HAP-1 (cell line): ENCODE measurements at regions of chr6 and their contacts with region 1.

Region 1: DNA sequence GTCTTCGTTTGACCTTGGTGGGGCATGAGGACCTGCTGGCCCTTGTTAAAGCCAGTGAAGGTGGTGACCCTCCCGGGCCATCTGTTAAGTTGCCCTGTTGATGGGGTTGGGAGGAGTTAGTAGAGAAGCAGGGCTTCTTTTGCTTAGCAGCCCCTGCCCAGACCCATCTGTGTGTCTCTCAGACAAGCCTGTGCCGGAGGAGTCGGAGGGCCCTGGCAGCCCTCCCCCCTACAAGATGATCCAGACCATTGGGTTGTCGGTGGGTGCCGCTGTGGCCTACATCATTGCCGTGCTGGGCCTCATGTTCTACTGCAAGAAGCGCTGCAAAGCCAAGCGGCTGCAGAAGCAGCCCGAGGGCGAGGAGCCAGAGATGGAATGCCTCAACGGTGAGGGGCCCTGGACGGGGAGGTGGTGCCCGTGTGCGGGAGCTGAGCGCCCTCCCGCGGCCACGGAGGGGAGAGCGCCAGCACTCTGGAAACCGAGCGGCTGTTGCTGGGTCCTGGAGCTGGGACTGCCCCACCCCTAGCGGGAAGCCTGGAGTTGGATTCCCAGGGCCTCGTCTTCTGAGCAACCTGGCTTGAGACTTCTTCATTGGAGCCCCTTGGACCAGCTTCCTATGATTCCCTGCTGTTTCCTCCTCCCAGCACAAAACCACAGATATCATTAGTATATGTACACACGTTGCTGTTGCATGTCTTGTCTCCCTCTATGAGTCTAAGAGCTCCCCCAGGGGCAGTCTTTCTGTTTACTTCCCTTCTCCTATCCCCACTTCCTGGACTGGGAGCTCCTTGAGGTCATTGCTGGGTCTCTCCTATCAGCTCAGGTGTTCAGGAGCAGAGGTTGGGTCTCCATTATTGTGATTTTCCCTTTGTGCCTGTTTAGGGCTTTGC is 27.6 kb upstream of the SRF start:
- DNase-seq: peak; percentile 84 to 91
- H3K4me3 ChIP-seq: no peak overlapping the region
- H3K4me1 ChIP-seq: peaks cover 3% of the 10 kb centered on the region; the same call in 1 of the 2 replicates
- H3K27me3 ChIP-seq: no peaks in the 10 kb centered on the region

Region 2: DNA sequence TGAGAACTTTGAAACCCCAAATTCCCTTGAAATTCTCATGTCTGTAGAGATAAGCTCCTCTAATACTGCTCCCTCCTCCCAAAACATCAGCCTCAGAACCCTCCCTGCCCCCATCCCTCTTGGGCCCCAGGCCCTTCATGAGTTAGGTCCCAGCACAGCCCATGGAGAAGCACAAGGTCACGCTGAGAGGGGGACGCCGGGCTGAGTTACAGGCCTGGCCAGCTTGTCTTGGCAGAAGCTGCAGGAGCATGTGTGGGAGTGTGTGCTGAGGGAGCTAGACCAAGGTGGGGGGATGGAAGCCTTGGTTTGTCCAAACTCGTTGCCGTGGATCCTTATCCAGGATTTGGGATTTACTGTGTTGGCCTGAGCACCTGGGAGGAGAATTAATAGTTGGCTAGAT is 236.1 kb before region 1 on chr6:
- in situ Hi-C with region 1: loop called (anchors 5 kb)
- DNase-seq: no peak
- H3K4me3 ChIP-seq: no peak overlapping the region
- H3K4me1 ChIP-seq: peaks cover 5% of the 10 kb centered on the region
- H3K27me3 ChIP-seq: no peaks in the 10 kb centered on the region

Region 3: DNA sequence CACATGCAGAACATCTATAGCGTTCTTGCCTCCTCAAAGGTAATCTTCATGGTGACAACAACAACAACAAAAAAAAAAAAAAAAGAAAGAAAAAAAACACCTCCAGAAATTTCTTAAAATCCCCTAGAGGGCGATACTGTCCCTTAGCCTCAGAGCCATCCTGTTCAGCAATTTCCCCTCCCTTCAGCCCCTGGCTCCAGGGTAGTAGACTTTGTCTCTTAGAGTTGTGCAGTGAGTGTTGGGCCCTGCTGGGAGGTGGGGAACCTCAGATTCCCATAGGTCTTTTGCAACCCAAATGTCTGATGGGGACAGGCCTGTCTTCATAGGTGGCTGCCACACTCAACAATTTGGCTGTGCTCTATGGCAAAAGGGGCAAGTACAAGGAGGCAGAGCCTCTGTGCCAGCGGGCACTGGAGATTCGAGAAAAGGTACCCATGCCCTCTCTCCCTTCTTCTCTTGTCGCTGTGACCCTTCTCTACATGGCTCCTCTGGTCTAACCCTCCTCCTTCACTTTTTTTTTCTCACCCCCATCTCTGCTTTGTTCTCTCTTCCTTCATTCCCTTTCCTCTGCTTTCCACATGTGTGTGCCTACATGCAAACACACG is 73.3 kb before region 1 on chr6:
- in situ Hi-C with region 1: loop called (anchors 5 kb)
- DNase-seq: peak; percentile 58 to 61
- H3K4me3 ChIP-seq: no peak overlapping the region
- H3K4me1 ChIP-seq: no peaks in the 10 kb centered on the region
- H3K27me3 ChIP-seq: no peaks in the 10 kb centered on the region

Region 4: DNA sequence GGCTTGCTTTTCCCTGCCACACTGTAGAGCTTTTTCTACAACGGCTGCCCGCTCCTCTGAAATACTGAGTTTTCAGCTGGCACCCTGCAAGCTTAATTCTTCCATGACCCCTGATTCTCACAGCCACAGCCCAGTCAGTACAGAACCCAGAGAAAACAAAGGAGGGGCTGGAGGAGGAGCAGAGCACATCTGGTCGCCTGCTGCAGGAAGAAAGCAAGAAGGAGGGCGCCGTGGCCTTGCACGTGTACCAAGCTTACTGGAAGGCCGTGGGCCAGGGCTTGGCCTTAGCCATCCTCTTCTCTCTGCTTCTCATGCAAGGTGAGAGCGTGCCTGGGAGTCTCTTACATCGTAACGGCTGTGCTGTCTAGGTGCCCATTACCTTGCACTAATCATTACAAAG is 300.6 kb after region 1 on chr6:
- in situ Hi-C with region 1: no loop called
- DNase-seq: no peak
- H3K4me3 ChIP-seq: no peak overlapping the region
- H3K4me1 ChIP-seq: no peaks in the 10 kb centered on the region
- H3K27me3 ChIP-seq: no peaks in the 10 kb centered on the region